ENCODE measurements at regions of chr1 and their contacts with region 1.

Region 1: DNA sequence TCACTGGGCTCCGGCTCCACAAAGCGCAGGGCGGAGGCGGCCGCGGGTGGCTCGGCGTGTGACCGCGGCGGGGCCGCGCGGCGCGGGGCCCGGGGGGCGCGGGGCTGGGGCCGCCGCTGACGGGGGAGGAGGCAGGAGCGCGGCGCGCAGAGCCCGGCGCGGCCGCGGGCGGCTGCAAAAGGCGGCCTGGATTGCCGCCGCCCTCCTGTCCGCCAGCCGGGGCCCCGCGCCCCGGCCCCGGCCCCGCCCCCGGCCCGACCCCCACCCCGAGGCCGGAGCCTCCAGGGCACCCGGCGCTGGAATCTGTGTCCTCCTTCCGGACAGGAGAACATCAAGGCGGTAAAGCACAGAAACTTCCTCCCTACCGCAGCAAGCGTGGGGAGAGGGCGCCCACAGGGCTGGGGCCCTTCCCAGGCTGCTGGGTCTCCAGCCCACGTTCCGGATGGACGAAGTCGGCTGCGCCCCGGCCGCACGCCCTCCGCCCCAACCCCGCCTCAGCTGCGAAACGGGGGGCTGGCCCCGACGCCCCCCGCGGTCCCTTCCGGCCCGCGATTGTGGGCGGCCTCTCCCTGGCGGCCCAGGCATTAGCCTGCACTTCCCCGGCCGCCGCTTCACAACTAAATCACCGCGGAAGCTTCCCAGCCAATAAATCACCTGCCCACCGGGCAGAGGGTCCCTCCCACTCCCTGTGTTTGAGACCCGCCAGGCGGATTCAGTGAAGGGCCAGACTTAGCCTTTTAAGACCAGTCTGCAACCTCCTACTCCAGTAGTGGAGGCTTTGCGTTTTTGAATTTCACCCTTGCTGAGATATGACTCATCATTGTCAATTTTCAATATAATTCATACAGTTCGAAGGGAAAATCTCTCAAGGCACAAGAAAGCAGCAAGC is 106.0 kb downstream of the SLC45A1 start:
- DNase-seq: peak; percentile 59
- ATAC-seq: peak; percentile 30
- H3K4me3 Mint-ChIP-seq: peak overlapping the region; percentile 90
- H3K27ac Mint-ChIP-seq: peak overlapping the region; percentile 96
- H3K4me1 Mint-ChIP-seq: peaks cover 48% of the 10 kb centered on the region
- H3K27me3 Mint-ChIP-seq: no peaks in the 10 kb centered on the region
- CTCF ChIP-seq: no peak

Region 2: GRCh38 chr1:8396786-8397406 is 27.0 kb before region 1 on chr1:
- CTCF ChIA-PET with region 1: no interaction called
- POLR2A ChIA-PET with region 1: interaction called, 6 read pairs
- intact Hi-C with region 1: loop called (anchors 1 kb)
- DNase-seq: no peak
- ATAC-seq: peak; percentile 4
- H3K4me3 Mint-ChIP-seq: peak overlapping the region; percentile 24
- H3K27ac Mint-ChIP-seq: peak overlapping the region; percentile 82
- H3K4me1 Mint-ChIP-seq: peaks cover 72% of the 10 kb centered on the region
- H3K27me3 Mint-ChIP-seq: no peaks in the 10 kb centered on the region
- CTCF ChIP-seq: no peak

Region 3: DNA sequence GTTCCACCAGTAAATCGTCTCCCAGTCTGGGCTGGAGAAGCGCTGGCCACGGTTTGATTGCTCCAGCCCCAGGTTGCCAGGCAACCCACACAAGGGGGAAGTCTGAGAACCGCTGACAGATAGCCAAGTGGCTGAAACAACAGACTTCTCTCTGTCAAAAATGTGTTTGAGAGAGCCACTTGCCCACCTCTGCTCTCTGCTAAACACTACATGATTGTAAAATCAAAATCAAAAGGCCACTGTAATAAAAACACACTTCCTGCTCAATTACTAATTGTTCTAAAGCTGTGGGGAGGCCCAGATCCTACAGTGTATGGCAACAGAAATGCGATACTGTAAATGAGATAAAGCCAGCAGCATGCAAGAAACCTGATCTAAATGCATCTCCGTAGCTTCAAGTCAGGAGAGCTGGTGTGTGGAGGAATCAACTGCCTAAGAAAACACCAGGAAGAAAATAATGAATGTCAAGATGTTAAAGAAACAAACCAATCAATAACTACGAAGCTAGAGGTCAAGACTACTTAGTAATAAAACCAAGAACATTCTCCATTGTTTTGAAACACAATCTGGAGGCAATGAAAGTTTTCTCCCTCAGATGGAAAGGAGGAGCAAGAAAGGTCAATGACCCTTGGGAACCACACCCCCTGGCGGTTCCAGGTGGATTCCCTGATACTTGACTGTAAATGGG is 15.3 kb after region 1 on chr1:
- CTCF ChIA-PET with region 1: interaction called, 4 read pairs
- POLR2A ChIA-PET with region 1: interaction called, 5 read pairs
- intact Hi-C with region 1: loop called (anchors 1 kb)
- DNase-seq: peak; percentile 49
- ATAC-seq: peak; percentile 94
- H3K4me3 Mint-ChIP-seq: peak overlapping the region; percentile 26
- H3K27ac Mint-ChIP-seq: peak overlapping the region; percentile 90
- H3K4me1 Mint-ChIP-seq: peaks cover 53% of the 10 kb centered on the region
- H3K27me3 Mint-ChIP-seq: no peaks in the 10 kb centered on the region
- CTCF ChIP-seq: no peak

Region 4: DNA sequence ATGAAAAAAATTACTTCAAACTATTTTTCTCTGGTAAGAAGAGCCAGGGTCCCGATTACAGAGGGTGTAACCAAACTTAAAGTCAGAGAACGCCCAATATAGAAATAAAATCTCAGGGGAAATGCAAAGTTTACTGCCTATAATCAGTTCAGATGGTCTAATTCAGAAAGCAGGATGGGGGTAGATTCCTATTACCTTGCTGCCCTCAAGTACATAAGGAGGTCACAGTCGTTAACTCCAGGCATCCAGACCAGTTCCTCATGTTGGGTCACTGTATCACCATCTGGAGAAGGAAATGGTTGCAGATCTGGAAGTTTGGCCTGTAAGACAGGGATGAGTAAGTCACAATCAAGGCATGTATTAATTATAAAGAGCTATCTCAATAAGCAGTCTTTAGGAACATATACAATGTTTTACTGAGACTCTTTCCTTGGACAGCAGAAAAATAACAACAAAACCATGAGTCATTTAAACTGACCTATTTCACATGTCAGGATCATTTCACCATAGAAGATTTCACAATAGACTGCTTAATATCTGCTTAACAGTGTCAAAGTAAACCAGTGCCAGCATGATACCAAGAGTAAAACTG is 73.4 kb after region 1 on chr1:
- CTCF ChIA-PET with region 1: interaction called, 3 read pairs
- POLR2A ChIA-PET with region 1: interaction called, 6 read pairs
- intact Hi-C with region 1: loop called (anchors 2 kb)
- DNase-seq: no peak
- ATAC-seq: peak; percentile 57
- H3K4me3 Mint-ChIP-seq: peak overlapping the region; percentile 46
- H3K27ac Mint-ChIP-seq: peak overlapping the region; percentile 93
- H3K4me1 Mint-ChIP-seq: peaks cover 63% of the 10 kb centered on the region
- H3K27me3 Mint-ChIP-seq: no peaks in the 10 kb centered on the region
- CTCF ChIP-seq: no peak

Region 5: GRCh38 chr1:8533124-8533523 is 109.2 kb after region 1 on chr1:
- CTCF ChIA-PET with region 1: no interaction called
- POLR2A ChIA-PET with region 1: interaction called, 3 read pairs
- intact Hi-C with region 1: loop called (anchors 2 kb)
- DNase-seq: no peak
- ATAC-seq: peak; percentile 69
- H3K4me3 Mint-ChIP-seq: peak overlapping the region; percentile 61
- H3K27ac Mint-ChIP-seq: peak overlapping the region; percentile 91
- H3K4me1 Mint-ChIP-seq: peaks cover 52% of the 10 kb centered on the region
- H3K27me3 Mint-ChIP-seq: no peaks in the 10 kb centered on the region
- CTCF ChIP-seq: no peak

Region 6: GRCh38 chr1:8878448-8879347 is 454.8 kb after region 1 on chr1 and contains the start of gene ENO1:
- CTCF ChIA-PET with region 1: no interaction called
- POLR2A ChIA-PET with region 1: interaction called, 5 read pairs
- intact Hi-C with region 1: loop called (anchors 5 kb)
- DNase-seq: peak; percentile 100
- ATAC-seq: peak; percentile 79
- H3K4me3 Mint-ChIP-seq: peak within 1 kb of the TSS; percentile 95
- H3K27ac Mint-ChIP-seq: peak within 1 kb of the TSS; percentile 96
- H3K4me1 Mint-ChIP-seq: peaks cover 45% of the 10 kb centered on the region
- H3K27me3 Mint-ChIP-seq: no peaks in the 10 kb centered on the region
- CTCF ChIP-seq: no peak
- total RNA-seq, gene ENO1: 837 and 886 TPM in 2 replicates